ENCODE measurements at regions of chr4 and their contacts with region 1.

Region 1: DNA sequence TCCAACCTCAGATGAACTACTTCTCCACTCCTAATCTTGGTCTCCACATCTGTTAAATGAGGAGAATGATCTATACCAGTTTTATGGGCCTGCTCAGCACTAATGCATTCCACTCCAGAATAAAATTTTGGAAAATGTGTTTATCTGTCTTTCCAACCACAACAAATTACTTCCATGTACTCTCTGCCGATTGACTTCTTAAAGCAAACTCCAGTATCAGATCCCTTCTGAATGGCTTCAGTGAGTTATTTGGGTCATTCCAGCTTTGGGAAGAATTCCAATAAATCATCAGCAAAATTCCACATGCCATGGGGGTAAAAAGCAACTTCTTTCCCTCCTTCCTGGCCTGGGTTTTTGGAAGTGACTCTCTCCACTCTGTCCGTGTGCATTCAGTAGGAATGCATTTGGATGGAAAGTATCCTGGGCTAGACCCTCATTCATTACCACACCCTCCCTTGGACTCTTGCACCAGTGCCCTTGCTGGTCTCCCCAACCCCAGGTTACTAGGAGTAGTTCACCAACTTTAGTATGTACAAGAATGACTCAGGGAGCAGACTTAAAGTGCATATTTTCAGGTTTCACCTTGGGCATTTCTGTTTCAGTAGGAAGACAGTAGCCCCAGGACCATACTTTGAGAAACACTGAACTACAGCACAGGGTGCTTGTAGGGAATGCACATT is 15.4 kb upstream of the ADH6 start:
- DNase-seq: no peak

Region 2: DNA sequence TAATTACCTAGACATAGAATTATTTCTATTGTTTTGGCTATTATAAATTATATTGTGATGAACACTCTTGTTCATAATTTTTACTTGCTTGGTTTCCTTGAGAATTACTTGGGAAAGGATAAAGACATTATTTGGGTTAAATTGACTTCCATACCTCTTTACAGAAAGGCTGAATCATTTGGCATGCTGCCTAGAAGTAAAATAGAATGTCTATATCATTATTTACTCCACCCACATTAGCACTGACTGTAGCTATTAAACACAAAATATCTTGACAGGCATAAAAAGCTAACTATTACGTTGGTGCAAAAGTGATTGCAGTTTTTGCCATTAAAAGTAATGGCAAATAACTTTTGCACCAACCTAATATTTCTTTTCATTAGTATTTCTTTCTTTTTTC is 14.2 kb after region 1 on chr4:
- intact Hi-C with region 1: loop called in 1 of 2 experiments (anchors 1 kb)
- DNase-seq: no peak

Region 3: DNA sequence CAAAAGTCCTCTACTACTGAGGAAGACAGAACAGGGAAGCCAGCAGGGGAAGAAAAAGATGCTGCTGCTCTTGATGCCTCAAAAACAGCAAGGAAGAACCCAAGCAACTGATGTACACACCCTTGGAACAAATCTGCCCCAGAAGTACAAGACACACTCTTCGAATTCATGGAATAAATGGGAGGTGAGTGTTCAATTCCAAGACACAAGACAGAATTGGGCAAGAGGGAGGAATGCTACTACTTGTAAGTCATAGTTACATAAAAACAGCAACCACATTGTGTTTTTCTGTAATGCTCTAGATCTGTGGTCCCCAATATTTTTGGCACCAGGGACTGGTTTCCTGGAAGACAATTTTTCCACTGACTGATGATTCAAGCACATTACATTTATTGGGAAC is 773.6 kb after region 1 on chr4:
- intact Hi-C with region 1: no loop called
- DNase-seq: no peak

Region 4: DNA sequence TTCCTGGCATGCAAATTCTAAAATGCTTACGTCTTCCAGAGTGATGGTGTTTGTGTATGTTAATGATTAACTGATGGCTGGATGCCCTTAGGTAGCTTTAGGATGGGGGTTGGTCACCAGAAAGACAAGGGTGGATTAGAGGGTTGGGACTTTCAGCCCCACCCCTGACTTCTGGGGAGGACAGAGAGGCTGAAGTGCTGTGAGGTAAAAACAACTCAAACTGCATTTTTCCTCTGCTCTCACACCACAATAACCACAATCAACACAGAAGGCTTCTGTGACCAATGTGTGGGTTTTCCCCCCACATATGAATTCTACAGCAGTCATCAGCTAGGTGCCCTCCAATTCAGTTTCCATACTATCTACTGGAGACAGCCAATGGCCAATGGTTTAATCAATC is 974.5 kb after region 1 on chr4:
- intact Hi-C with region 1: no loop called
- DNase-seq: no peak

Measured in posterior vena cava (tissue), 2 donors.